GM10248 (cell line): ENCODE measurements at regions of chr5 and their contacts with region 1.

Region 1: GRCh38 chr5:57137401-57137800 is 36.5 kb upstream of the GPBP1 start:
- DNase-seq: no peak
- CTCF ChIP-seq: no peak

Region 2: DNA sequence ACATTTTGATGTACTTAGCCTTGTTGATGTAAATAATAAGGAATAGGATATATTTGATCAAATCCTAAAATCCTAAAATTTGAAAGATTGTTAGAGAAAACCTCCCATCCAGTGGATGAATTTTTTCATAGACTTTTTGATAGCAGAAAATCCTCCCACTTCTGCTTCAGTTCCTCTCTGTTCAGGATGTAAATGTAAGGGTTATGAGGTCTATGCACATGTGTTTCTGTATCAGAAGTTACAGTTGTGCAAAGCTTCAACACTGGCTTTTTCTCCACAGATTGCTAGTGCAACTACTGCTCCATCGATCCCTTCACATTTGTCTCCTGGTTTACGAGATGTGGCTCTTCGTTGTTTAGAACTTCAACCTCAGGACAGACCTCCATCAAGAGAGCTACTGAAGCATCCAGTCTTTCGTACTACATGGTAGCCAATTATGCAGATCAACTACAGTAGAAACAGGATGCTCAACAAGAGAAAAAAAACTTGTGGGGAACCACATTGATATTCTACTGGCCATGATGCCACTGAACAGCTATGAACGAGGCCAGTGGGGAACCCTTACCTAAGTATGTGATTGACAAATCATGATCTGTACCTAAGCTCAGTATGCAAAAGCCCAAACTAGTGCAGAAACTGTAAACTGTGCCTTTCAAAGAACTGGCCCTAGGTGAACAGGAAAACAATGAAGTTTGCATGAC is 244.0 kb before region 1 on chr5:
- CTCF ChIA-PET with region 1: interaction called, 60 read pairs
- POLR2A ChIA-PET with region 1: no interaction called
- DNase-seq: no peak
- CTCF ChIP-seq: no peak

Region 3: GRCh38 chr5:56909294-56910209 is 227.8 kb before region 1 on chr5 and contains the start of gene SETD9:
- CTCF ChIA-PET with region 1: interaction called, 12 read pairs
- POLR2A ChIA-PET with region 1: no interaction called
- DNase-seq: peak; percentile 98
- CTCF ChIP-seq: no peak

Region 4: GRCh38 chr5:57150681-57151080 is 13.3 kb after region 1 on chr5:
- CTCF ChIA-PET with region 1: interaction called, 34 read pairs
- POLR2A ChIA-PET with region 1: no interaction called
- DNase-seq: no peak
- CTCF ChIP-seq: no peak

Region 5: GRCh38 chr5:57221049-57221568 is 83.7 kb after region 1 on chr5:
- CTCF ChIA-PET with region 1: interaction called, 15 read pairs
- POLR2A ChIA-PET with region 1: no interaction called
- DNase-seq: peak; percentile 40
- CTCF ChIP-seq: peak; percentile 66